ENCODE measurements at regions of chr14 and their contacts with region 1.

Region 1: GRCh38 chr14:76876076-76876475 is 49.9 kb downstream of the LRRC74A start:
- DNase-seq: peak; percentile 43 to 69 (median 65)
- H3K4me3 ChIP-seq: no peak overlapping the region
- H3K4me3 Mint-ChIP-seq: no peak overlapping the region
- H3K27ac ChIP-seq: no peak overlapping the region
- H3K27ac Mint-ChIP-seq: peak overlapping the region in 2 of 7 donors; percentile 15 to 50
- H3K4me1 ChIP-seq: no peaks in the 10 kb centered on the region
- H3K4me1 Mint-ChIP-seq: peaks cover 2% of the 10 kb centered on the region
- H3K27me3 ChIP-seq: no peaks in the 10 kb centered on the region
- H3K27me3 Mint-ChIP-seq: peaks cover 0 to 4% (median 2%) of the 10 kb centered on the region in 3 donors
- CTCF ChIP-seq: peak; percentile 87

Region 2: GRCh38 chr14:76904740-76905438 is 28.8 kb after region 1 on chr14:
- intact Hi-C with region 1: no loop called
- DNase-seq: peak; percentile 97 to 99 (median 99)
- H3K4me3 ChIP-seq: no peak overlapping the region
- H3K4me3 Mint-ChIP-seq: peak overlapping the region; percentile 20 to 51
- H3K27ac ChIP-seq: peak overlapping the region; percentile 42 to 79
- H3K27ac Mint-ChIP-seq: peak overlapping the region; percentile 81 to 95 (median 90)
- H3K4me1 ChIP-seq: peaks cover 26 to 29% of the 10 kb centered on the region in 2 donors
- H3K4me1 Mint-ChIP-seq: peaks cover 31% of the 10 kb centered on the region
- H3K27me3 ChIP-seq: no peaks in the 10 kb centered on the region
- H3K27me3 Mint-ChIP-seq: peaks cover 14 to 16% (median 14%) of the 10 kb centered on the region in 3 donors
- CTCF ChIP-seq: no peak

Region 3: DNA sequence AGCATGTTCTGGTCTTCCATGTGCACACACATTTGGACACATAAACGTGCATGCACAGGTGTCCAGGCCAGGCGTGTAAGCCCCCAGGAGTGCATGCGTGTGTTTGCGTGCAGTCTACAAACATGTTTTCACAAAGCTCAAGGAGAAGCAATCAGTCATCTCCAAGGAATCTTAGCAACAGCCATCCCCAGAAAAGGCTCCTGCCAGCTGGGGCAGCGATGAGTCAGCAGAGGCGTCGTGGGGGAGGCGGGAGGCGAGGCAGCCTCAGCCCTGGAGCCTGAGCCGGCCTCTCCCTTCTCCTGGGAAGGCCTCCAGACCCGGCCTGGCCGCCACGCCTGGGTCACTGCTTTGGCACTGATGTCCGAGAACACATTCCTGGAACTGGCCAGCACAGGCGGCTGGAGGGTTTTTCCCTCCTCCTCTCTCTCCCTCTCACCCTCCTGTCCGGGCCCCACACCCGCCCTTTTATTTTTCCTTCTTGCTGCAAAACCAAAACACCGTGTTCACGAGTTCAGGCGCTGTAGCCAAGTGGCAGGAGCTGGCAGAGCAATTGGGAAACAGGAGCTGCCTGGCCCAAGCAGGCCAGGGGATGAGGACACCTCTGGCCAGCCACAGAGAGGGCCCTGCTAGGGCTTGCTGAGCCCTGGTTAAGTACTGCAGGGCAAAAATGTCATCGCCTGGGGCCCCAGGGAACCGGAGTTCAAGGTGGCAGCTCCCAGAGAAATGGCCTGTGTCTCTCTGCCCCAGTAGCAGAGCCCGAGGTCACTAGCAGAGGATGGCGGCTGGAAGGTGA is 42.9 kb after region 1 on chr14:
- intact Hi-C with region 1: loop called (anchors 5 kb)
- DNase-seq: peak; percentile 61 to 75 (median 75)
- H3K4me3 ChIP-seq: peak overlapping the region in 1 of 3 experiments; percentile 19
- H3K4me3 Mint-ChIP-seq: peak overlapping the region in 1 of 2 donors; percentile 82
- H3K27ac ChIP-seq: peak overlapping the region; percentile 50 to 86
- H3K27ac Mint-ChIP-seq: peak overlapping the region; percentile 89 to 96 (median 94)
- H3K4me1 ChIP-seq: peaks cover 45 to 54% of the 10 kb centered on the region in 2 donors
- H3K4me1 Mint-ChIP-seq: peaks cover 52% of the 10 kb centered on the region
- H3K27me3 ChIP-seq: no peaks in the 10 kb centered on the region
- H3K27me3 Mint-ChIP-seq: peaks cover 18 to 32% (median 22%) of the 10 kb centered on the region in 3 donors
- CTCF ChIP-seq: no peak

Region 4: DNA sequence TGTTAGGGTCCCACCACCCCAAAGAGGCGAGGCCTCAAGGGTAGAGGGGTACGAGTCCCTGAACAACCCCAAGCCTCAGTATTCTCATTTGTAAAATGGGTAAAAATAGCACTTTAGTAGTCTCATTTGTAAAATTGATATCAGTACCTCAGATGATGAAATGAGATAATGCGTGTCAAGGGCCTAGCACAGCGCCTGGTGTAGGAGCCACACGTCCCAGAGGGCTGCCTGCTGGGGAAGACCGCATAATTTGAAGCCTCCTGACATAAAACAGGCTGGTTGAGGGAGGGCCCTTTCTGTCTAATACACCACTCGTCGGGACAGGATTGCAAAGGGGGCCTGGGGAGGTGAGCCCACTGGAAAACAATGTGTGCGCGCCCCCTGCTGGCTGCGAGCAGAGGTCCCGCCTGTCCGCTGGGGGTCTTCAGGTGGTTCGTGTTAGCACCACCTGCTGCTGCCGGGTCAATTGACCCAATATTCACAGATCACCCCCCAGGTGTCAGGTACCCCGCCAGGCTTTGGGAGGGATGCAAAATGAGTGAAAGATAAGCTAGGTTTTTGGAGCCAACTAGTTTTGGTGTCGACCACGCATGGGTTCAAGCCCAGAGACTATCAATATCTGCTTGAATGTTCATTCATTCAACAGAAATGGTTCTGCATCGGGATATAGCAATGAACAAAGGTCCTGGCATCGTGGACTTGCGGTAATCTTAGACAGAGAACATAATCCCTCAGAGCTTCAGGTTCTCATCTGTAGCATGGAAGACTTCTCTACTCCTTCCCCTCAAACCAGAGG is 177.2 kb after region 1 on chr14:
- intact Hi-C with region 1: loop called in 1 of 2 experiments (anchors 5 kb)
- DNase-seq: peak; percentile 59 to 79 (median 70)
- H3K4me3 ChIP-seq: no peak overlapping the region
- H3K4me3 Mint-ChIP-seq: no peak overlapping the region
- H3K27ac ChIP-seq: no peak overlapping the region
- H3K27ac Mint-ChIP-seq: peak overlapping the region in 2 of 7 donors; percentile 26 to 50
- H3K4me1 ChIP-seq: peaks cover 9 to 12% of the 10 kb centered on the region in 2 donors
- H3K4me1 Mint-ChIP-seq: peaks cover 19% of the 10 kb centered on the region
- H3K27me3 ChIP-seq: no peaks in the 10 kb centered on the region
- H3K27me3 Mint-ChIP-seq: peaks cover 0 to 4% (median 0%) of the 10 kb centered on the region in 3 donors
- CTCF ChIP-seq: peak; percentile 97

Region 5: DNA sequence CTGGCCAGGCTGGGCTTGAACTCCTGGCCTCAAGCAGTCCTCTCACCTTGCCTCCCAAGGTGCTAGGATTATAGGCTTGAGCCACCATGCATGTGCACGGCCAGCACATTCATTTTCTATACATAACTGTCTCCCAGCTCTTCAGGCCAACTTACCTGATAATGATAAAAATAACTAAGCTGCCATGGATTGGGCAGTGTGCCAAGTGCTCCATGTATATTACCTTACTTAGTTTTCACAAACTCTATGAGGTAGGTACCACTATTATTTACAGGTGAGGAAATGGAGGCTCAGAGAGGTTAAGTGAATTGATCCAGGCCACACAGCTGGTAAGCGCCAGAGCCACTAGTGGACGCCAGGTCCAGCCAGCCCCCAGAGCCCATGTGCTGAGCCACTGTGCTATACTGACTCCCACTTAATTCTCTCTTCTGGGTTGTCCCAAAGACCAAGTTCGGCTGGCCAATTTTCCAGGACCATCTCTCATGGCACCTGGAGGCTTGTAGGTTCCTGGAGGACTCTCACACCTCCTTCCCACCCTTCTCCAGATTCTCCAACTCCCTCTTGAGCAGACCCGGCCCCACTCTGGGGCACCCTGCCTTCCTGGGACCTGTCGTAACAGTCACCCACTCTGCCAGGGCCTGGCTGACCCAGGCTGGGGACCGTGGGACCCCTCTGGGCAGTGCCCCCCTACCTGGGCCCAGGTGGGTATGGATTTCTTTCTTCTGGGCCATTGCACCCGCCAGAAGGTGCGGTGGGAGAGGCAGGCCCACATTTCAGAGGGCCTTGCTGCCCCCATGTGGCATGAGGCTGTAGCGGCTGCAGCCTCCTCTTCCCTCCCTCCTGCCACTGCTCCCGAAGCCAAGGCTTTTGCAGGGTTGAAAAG is 191.8 kb after region 1 on chr14:
- intact Hi-C with region 1: loop called (anchors 1 kb)
- DNase-seq: peak in 2 of 3 donors; percentile 43 to 47
- H3K4me3 ChIP-seq: no peak overlapping the region
- H3K4me3 Mint-ChIP-seq: peak overlapping the region in 1 of 2 donors; percentile 6
- H3K27ac ChIP-seq: no peak overlapping the region
- H3K27ac Mint-ChIP-seq: no peak overlapping the region
- H3K4me1 ChIP-seq: peaks cover 5 to 11% of the 10 kb centered on the region in 2 donors
- H3K4me1 Mint-ChIP-seq: peaks cover 12% of the 10 kb centered on the region
- H3K27me3 ChIP-seq: no peaks in the 10 kb centered on the region
- H3K27me3 Mint-ChIP-seq: peaks cover 7 to 8% (median 7%) of the 10 kb centered on the region in 3 donors
- CTCF ChIP-seq: peak; percentile 87